Breast epithelium (tissue), 4 donors: ENCODE measurements at regions of chr6 and their contacts with region 1.

Region 1: DNA sequence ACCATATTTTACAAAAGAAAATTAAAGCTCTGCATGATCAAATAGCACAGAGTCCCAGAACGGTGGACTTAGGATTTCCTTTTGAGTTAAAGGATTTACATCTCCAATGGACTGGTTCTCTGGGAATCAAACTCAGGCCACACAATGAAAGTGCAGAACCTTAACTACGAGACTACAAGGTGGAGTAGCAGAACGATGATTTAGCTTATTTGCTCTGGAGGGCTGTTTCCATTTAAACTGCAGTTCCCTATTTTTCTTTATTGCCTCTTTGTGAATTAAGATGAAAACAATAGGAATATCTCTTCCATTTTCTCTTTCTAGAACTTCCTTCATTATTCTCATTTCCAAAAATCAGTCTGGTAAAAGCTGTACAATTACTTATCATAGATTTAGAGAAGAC is 65.7 kb downstream of the TFAP2B start:
- DNase-seq: no peak
- H3K4me3 ChIP-seq: no peak overlapping the region
- H3K27ac ChIP-seq: no peak overlapping the region
- H3K4me1 ChIP-seq: no peaks in the 10 kb centered on the region
- H3K27me3 ChIP-seq: no peaks in the 10 kb centered on the region
- CTCF ChIP-seq: no peak
- POLR2A ChIP-seq: no peak

Region 2: GRCh38 chr6:49646130-49646824 is 1238.1 kb before region 1 on chr6:
- intact Hi-C with region 1: no loop called
- DNase-seq: no peak
- H3K4me3 ChIP-seq: no peak overlapping the region
- H3K27ac ChIP-seq: no peak overlapping the region
- H3K4me1 ChIP-seq: no peaks in the 10 kb centered on the region
- H3K27me3 ChIP-seq: no peaks in the 10 kb centered on the region
- CTCF ChIP-seq: no peak
- POLR2A ChIP-seq: no peak

Region 3: DNA sequence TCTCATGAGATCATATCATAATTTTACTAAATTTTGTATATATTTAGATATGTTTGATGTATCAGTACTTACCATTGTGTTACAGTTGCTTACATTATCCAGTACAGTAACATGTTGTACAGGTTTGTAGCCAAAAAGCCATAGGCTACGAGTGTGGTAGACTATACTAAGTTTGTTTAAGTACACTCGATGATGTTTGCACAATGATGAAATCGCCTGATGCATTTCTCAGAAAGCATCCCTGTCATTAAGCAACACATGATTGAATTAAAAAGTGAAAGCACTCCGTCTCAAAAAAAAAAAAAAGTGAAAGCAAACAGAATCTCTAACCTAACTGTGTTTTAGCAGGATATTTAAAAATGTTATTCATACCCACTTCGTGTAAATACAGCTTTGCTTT is 275.9 kb before region 1 on chr6:
- intact Hi-C with region 1: loop called (anchors 5 kb)
- DNase-seq: no peak
- H3K4me3 ChIP-seq: no peak overlapping the region
- H3K27ac ChIP-seq: no peak overlapping the region
- H3K4me1 ChIP-seq: no peaks in the 10 kb centered on the region
- H3K27me3 ChIP-seq: no peaks in the 10 kb centered on the region
- CTCF ChIP-seq: no peak
- POLR2A ChIP-seq: no peak

Region 4: DNA sequence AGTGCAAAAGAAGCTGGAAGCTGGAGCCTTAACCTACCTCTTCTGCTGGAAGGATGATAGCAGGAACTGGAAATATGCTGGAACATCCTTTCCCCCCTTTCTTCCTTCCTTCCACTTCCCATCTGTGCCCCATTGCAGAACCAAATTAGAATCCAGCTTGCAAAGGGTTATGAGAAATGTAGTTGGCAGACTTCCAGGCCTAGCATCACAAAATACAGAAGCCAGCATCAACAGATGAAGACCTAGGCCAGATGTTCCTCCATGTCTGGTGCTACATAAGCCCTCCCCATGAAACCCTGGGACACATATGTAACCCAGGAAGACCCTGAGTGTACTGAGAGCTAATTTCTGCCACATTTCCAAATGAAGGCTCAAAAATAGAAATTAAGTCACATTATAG is 105.7 kb before region 1 on chr6:
- intact Hi-C with region 1: no loop called
- DNase-seq: no peak
- H3K4me3 ChIP-seq: no peak overlapping the region
- H3K27ac ChIP-seq: no peak overlapping the region
- H3K4me1 ChIP-seq: no peaks in the 10 kb centered on the region
- H3K27me3 ChIP-seq: no peaks in the 10 kb centered on the region
- CTCF ChIP-seq: no peak
- POLR2A ChIP-seq: no peak